ENCODE measurements at regions of chr22 and their contacts with region 1.

Region 1: DNA sequence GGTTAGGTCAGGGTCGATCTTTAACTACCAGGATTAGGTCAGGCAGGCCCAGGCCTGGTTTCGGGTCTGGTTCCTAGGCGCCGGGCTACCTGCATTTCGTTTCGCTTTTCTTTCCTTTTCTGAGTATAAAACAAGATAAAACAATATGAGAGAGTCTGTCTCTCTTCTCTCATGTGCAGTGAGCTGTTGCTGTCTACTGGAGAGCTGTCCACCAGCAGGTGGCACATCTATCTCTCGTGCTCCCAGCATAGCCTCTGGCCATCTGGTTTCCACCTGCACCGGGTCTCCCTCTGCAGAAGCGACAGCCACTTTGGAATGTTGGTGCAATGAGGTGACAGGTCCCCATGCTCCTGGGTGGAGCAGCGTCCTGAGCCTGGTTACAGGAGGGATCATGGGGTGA is 27.6 kb downstream of the RIBC2 start:
- DNase-seq: peak; percentile 91 to 94
- H3K4me3 ChIP-seq: no peak overlapping the region
- H3K4me3 Mint-ChIP-seq: peak overlapping the region; percentile 71
- H3K27ac Mint-ChIP-seq: peak overlapping the region; percentile 96
- H3K4me1 ChIP-seq: peaks cover 63% of the 10 kb centered on the region
- H3K4me1 Mint-ChIP-seq: peaks cover 47% of the 10 kb centered on the region
- H3K27me3 ChIP-seq: no peaks in the 10 kb centered on the region
- H3K27me3 Mint-ChIP-seq: no peaks in the 10 kb centered on the region
- CTCF ChIP-seq: peak; percentile 37 to 65

Region 2: DNA sequence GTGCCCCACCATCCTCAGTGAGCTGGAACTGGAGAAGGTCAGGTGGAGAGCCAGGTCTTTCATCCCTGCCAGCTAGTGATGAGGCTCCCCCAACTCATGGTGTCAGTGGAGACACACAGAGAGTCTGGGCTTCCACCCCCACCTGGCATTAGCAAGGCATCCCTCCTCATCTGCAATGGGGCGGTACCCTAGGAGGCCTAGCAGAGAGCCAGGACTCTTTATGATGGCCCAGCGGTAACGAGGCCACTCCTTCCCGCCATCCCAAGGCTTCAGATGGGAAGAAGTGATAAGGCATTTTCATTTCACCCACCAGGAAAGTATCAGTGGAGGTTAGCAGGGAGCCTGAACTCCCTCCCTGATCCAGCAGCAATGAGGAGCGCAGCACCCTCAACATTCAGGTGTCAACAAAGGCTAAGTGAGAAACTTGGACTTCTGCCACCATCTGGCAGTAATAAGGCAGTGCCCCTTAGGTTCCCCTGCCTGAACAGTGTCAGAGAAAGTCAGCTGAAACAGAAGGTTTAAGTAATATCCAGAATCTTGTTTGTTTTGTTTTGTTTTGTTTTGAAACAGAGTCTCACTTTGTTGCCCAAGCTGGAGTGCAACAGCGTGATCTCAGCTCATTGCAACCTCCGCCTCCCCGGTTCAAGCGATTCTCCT is 21.0 kb after region 1 on chr22:
- CTCF ChIA-PET with region 1: interaction called, 5 read pairs
- POLR2A ChIA-PET with region 1: no interaction called
- intact Hi-C with region 1: loop called (anchors 1 kb)
- DNase-seq: peak in 1 of 2 experiments; percentile 55
- H3K4me3 ChIP-seq: no peak overlapping the region
- H3K4me3 Mint-ChIP-seq: no peak overlapping the region
- H3K27ac Mint-ChIP-seq: no peak overlapping the region
- H3K4me1 ChIP-seq: no peaks in the 10 kb centered on the region
- H3K4me1 Mint-ChIP-seq: peaks cover 3% of the 10 kb centered on the region
- H3K27me3 ChIP-seq: no peaks in the 10 kb centered on the region
- H3K27me3 Mint-ChIP-seq: no peaks in the 10 kb centered on the region
- CTCF ChIP-seq: peak in 1 of 2 experiments; percentile 36

Region 3: GRCh38 chr22:45478108-45478771 is 37.1 kb after region 1 on chr22:
- CTCF ChIA-PET with region 1: interaction called, 4 read pairs
- POLR2A ChIA-PET with region 1: interaction called, 16 read pairs
- intact Hi-C with region 1: loop called (anchors 1 kb)
- DNase-seq: peak; percentile 78 to 88
- H3K4me3 ChIP-seq: no peak overlapping the region
- H3K4me3 Mint-ChIP-seq: peak overlapping the region; percentile 39
- H3K27ac Mint-ChIP-seq: peak overlapping the region; percentile 65
- H3K4me1 ChIP-seq: peaks cover 70% of the 10 kb centered on the region
- H3K4me1 Mint-ChIP-seq: peaks cover 33% of the 10 kb centered on the region
- H3K27me3 ChIP-seq: no peaks in the 10 kb centered on the region
- H3K27me3 Mint-ChIP-seq: no peaks in the 10 kb centered on the region
- CTCF ChIP-seq: no peak

Region 4: GRCh38 chr22:45483918-45484499 is 42.9 kb after region 1 on chr22:
- CTCF ChIA-PET with region 1: no interaction called
- POLR2A ChIA-PET with region 1: interaction called, 4 read pairs
- intact Hi-C with region 1: loop called (anchors 1 kb)
- DNase-seq: peak; percentile 93 to 94
- H3K4me3 ChIP-seq: no peak overlapping the region
- H3K4me3 Mint-ChIP-seq: peak overlapping the region; percentile 50
- H3K27ac Mint-ChIP-seq: peak overlapping the region; percentile 88
- H3K4me1 ChIP-seq: peaks cover 40% of the 10 kb centered on the region
- H3K4me1 Mint-ChIP-seq: peaks cover 12% of the 10 kb centered on the region
- H3K27me3 ChIP-seq: no peaks in the 10 kb centered on the region
- H3K27me3 Mint-ChIP-seq: no peaks in the 10 kb centered on the region
- CTCF ChIP-seq: no peak

Region 5: GRCh38 chr22:45502215-45503049 is 61.3 kb after region 1 on chr22 and contains the start of gene FBLN1:
- CTCF ChIA-PET with region 1: interaction called, 3 read pairs
- POLR2A ChIA-PET with region 1: interaction called, 3 read pairs
- intact Hi-C with region 1: loop called (anchors 1 kb)
- DNase-seq: peak; percentile 78 to 89
- H3K4me3 ChIP-seq: peak within 1 kb of the TSS; percentile 90
- H3K4me3 Mint-ChIP-seq: peak within 1 kb of the TSS; percentile 93
- H3K27ac Mint-ChIP-seq: peak within 1 kb of the TSS; percentile 90
- H3K4me1 ChIP-seq: peaks cover 44% of the 10 kb centered on the region
- H3K4me1 Mint-ChIP-seq: peaks cover 19% of the 10 kb centered on the region
- H3K27me3 ChIP-seq: no peaks in the 10 kb centered on the region
- H3K27me3 Mint-ChIP-seq: no peaks in the 10 kb centered on the region
- CTCF ChIP-seq: peak; percentile 53 to 61
- total RNA-seq, gene FBLN1: 510 and 519 TPM in 2 replicates

Region 6: DNA sequence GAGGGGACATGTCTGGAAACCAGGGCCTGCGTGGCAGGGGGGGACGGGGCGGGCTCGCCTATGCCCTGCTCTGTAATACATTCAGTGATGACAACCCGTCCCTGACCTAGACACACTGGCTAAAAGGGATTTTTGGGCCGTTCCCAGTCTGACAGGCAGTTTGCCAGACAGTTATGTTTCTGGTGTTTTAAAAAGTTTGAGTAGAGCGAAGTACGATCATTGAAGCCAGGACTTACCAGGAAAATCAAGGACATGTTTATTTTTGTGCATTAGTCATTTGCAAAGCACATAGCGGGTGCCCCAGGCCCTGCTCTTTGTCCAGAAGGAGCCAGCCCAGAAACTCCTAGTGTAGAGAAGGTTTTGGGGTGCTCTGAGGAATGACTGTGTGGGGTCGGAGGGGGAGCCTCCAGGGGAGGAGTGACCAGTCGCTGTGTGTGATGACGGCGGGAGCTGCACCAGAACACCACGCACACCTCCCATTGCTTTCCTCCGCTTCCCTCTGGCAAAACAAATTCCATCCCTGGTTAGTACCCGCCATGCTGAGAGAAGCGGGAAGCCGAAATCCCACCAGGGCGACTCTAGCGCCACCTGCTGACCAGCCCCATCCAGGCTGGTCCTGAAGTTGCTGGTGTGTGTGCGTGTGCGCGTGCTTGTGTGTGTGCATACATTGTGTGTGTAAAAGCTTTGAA is 112.4 kb after region 1 on chr22:
- CTCF ChIA-PET with region 1: no interaction called
- POLR2A ChIA-PET with region 1: no interaction called
- intact Hi-C with region 1: loop called (anchors 5 kb)
- DNase-seq: peak; percentile 47 to 74
- H3K4me3 ChIP-seq: no peak overlapping the region
- H3K4me3 Mint-ChIP-seq: peak overlapping the region; percentile 11
- H3K27ac Mint-ChIP-seq: no peak overlapping the region
- H3K4me1 ChIP-seq: peaks cover 4% of the 10 kb centered on the region; the same call in 1 of the 2 replicates
- H3K4me1 Mint-ChIP-seq: no peaks in the 10 kb centered on the region
- H3K27me3 ChIP-seq: no peaks in the 10 kb centered on the region
- H3K27me3 Mint-ChIP-seq: no peaks in the 10 kb centered on the region
- CTCF ChIP-seq: peak; percentile 64